Activated CD4-positive, alpha-beta T cell treated with anti-CD3 and anti-CD28 coated beads, Interleukin-2, amount 10 ng/mL, durations not matched to agents 24 days and 14 days (primary cell): ENCODE measurements at regions of chrX and their contacts with region 1.

Region 1: GRCh38 chrX:136646602-136647239 is 1.2 kb upstream of the CD40LG start:
- DNase-seq: peak; percentile 79
- H3K4me3 Mint-ChIP-seq: peak overlapping the region; percentile 98
- H3K27ac Mint-ChIP-seq: peak overlapping the region; percentile 98
- H3K4me1 Mint-ChIP-seq: peaks cover 43% of the 10 kb centered on the region
- H3K27me3 Mint-ChIP-seq: no peaks in the 10 kb centered on the region

Region 2: GRCh38 chrX:136616987-136617685 is 29.6 kb before region 1 on chrX:
- intact Hi-C with region 1: loop called (anchors 1 kb)
- DNase-seq: peak; percentile 77
- H3K4me3 Mint-ChIP-seq: peak overlapping the region; percentile 41
- H3K27ac Mint-ChIP-seq: peak overlapping the region; percentile 88
- H3K4me1 Mint-ChIP-seq: peaks cover 46% of the 10 kb centered on the region
- H3K27me3 Mint-ChIP-seq: no peaks in the 10 kb centered on the region

Region 3: DNA sequence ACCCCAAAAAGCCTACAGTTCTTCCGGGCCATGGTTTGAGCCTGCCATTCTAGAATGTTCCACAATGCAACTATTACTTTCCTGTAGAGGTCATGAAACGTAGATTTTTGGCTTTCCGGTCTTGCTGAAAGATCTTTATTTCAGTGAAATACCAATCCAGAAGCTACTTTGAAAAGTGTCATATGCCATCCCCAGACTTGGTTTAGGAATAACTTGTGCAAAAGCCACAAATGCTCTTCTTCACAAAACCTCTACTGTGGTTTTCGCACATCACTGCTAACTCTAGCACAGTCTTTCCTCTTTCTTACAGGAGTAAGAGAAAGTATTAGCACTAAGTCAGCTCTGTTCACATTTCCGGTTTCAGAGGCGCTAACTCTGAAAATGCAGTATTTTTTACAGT is 11.5 kb before region 1 on chrX:
- intact Hi-C with region 1: loop called (anchors 1 kb)
- DNase-seq: peak; percentile 81
- H3K4me3 Mint-ChIP-seq: peak overlapping the region; percentile 78
- H3K27ac Mint-ChIP-seq: peak overlapping the region; percentile 91
- H3K4me1 Mint-ChIP-seq: peaks cover 63% of the 10 kb centered on the region
- H3K27me3 Mint-ChIP-seq: no peaks in the 10 kb centered on the region

Region 4: GRCh38 chrX:136689436-136689835 is 42.7 kb after region 1 on chrX:
- intact Hi-C with region 1: loop called (anchors 1 kb)
- DNase-seq: peak; percentile 74
- H3K4me3 Mint-ChIP-seq: peak overlapping the region; percentile 36
- H3K27ac Mint-ChIP-seq: peak overlapping the region; percentile 84
- H3K4me1 Mint-ChIP-seq: peaks cover 50% of the 10 kb centered on the region
- H3K27me3 Mint-ChIP-seq: no peaks in the 10 kb centered on the region